ENCODE measurements at regions of chr6 and their contacts with region 1.

Region 1: GRCh38 chr6:12605888-12606345 is 110.7 kb upstream of the PHACTR1 start:
- DNase-seq: peak in 3 of 10 donors; percentile 32 to 51 (median 47)

Region 2: DNA sequence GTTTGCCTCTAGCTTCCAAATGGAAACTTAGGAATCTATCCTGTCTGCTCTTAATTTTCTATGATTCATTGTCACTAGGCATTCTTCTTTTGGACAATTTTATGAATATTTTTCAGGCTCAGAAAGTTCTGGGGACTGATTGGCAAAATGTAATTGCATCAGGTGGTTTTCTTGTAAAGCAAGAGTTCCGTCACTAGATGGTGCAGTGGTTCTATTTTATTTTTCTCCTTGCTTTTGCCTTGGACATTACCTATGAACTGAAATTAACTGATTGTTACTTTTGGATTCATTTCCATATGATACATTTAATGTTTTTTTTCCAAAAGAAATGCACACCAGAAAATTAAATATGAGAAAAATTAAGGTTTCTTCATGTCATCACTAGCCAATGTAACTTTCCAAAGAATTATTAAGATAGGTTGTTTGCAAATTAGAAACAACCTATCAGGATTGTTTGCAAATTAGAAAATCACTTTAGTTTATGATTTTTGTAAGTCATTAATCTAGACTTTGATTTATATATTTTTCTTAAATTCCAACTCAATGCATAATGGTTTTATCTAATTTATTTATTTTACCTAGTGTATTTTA is 1020.4 kb before region 1 on chr6:
- intact Hi-C with region 1: loop called (anchors 10 kb)
- DNase-seq: no peak

Region 3: DNA sequence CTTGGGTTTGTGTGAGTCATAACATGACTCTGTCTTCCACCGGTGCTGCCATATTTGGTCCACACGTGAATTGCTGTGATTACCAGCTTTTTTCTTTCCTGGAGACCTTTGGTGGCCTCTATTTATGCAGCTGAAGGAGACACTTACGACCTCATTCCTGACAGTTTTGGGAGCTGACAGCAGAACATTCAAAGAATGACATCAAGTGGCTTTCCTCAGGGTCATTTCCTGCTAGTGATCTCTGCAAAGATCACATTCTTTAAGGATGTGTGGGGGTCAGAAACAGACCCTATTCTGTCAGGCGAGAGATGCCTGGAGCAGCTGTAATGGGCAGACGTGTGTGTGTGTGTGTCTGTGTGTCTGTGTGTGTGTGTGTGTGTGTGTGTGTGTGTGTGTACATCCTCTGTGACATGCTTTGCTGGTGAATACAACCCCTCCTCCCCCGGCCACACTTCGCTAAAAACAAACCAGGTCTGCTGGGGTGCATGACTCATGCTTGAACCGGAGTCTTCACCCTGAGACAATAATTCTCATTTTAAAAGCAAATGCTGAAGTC is 952.8 kb before region 1 on chr6:
- intact Hi-C with region 1: loop called (anchors 5 kb)
- DNase-seq: peak in 1 of 10 donors; percentile 66

Region 4: GRCh38 chr6:11700118-11700718 is 905.7 kb before region 1 on chr6:
- intact Hi-C with region 1: loop called (anchors 5 kb)
- DNase-seq: no peak

Region 5: GRCh38 chr6:12150812-12151432 is 455.0 kb before region 1 on chr6:
- intact Hi-C with region 1: loop called (anchors 10 kb)
- DNase-seq: peak in 8 of 10 donors; percentile 27 to 91 (median 61)

Region 6: GRCh38 chr6:12289933-12290820 is 315.7 kb before region 1 on chr6 and contains the start of gene EDN1:
- intact Hi-C with region 1: loop called (anchors 10 kb)
- DNase-seq: peak; percentile 49 to 95 (median 70)

Region 7: DNA sequence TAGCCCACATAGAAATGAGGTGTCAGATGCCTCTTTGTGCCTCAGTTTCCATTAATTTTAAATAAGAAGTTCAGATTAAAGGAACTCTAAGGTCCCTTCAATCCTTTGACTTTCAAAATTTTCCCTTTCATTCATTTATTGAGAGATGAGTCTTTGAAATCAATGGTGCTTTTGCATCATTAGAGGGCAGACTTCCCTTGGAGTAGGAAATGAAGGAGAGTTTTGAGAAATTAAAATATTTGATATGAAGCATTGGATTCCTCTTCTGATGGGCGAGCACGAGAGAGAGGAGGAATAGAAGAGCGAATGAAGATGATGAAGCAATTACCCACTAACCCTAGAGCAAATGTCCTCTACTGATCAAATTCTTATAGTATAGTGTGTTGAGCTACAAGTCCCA is 210.0 kb before region 1 on chr6:
- intact Hi-C with region 1: loop called (anchors 5 kb)
- DNase-seq: no peak

Region 8: GRCh38 chr6:12962987-12963386 is 357.1 kb after region 1 on chr6:
- intact Hi-C with region 1: no loop called
- DNase-seq: no peak